Common myeloid progenitor, CD34-positive (primary cell): ENCODE measurements at regions of chr11 and their contacts with region 1.

Region 1: DNA sequence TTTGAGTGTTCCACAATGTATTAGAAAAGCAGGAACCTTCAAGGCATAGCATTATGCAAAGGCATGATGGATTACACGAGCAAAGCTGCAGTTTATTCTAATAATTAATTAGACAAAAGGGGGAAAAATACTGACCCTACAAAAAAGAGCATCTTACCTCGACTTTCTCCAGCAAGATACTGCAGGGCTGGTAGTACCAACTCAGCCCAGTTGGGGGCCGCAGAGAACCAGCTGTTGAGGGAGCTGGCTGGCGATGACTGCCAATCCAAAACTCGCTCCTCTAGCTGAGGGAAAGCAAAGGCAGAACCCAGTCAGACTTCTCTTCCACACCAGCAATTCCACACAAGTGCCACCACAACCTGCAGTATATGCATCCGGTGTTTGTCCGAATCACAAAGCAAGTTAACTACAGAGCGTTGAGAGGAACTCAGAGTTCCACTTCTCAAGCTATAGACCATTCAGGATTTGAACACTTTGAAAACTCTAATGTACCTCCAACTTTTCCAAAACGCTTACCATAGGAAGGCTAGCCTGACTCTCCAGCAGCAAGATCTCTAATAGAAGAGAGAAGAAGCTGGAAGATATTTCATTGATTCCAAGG is 13.7 kb downstream of the NFRKB start:
- DNase-seq: peak; percentile 40 to 63 (median 55)
- H3K4me3 ChIP-seq: no peak overlapping the region
- H3K27ac ChIP-seq: no peak overlapping the region
- H3K4me1 ChIP-seq: no peaks in the 10 kb centered on the region
- H3K27me3 ChIP-seq: no peaks in the 10 kb centered on the region

Region 2: DNA sequence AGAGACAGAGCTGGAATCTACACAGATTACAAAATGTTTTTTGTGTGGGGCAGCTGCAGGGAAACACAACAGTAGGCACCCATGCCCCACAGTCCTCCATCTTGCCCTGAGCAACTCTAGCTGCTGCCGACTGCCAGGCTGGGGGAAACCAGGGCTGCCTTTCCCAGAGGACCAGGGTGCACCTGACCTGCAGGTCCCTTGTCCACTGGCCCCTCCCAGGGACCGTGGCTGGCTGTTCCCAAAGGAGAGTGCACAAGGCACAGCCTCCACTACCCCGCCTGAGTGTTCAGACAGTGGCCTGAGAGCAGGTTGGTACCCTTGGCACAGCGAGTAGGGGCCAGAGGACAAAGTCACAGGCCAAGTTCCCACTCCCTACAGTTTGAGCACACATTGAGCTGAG is 324.2 kb before region 1 on chr11:
- CTCF ChIA-PET with region 1: no interaction called
- POLR2A ChIA-PET with region 1: no interaction called
- DNase-seq: no peak
- H3K4me3 ChIP-seq: no peak overlapping the region
- H3K27ac ChIP-seq: no peak overlapping the region
- H3K4me1 ChIP-seq: no peaks in the 10 kb centered on the region
- H3K27me3 ChIP-seq: peaks cover 0 to 3% (median 0%) of the 10 kb centered on the region in 5 experiments

Region 3: DNA sequence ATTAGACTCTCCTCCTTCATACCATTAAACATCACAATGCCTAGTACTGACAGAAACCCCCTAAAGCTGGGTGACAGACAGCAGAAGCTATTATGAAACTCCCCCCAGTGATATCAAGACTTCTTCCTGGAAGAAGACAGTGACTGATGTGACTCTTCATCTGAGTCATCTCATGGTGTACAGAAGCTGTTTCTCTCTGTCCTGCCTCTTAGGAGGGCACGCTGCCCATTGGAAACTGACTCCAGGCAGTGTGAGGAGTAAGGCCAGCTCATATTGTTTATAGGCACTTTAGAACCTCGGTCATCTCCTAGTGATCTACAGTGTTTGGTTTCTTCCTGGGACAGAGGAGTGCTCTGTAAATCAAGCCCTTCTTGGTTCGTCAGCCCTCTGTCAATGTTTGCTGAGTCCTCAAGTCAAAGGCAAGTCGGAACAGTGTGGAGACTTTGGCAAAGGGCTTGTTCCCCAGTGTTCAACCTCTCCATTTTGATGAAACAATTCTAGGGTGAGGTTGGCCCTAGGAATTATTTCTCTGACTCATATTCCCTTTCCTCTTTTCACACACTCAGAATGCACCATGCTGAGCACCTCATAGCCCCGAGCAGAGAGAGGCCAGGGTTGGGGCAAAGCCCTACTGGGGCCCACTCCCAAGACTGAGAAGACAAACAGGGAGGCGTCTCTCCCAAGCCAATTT is 238.5 kb before region 1 on chr11:
- CTCF ChIA-PET with region 1: no interaction called
- POLR2A ChIA-PET with region 1: no interaction called
- DNase-seq: no peak
- H3K4me3 ChIP-seq: no peak overlapping the region
- H3K27ac ChIP-seq: no peak overlapping the region
- H3K4me1 ChIP-seq: no peaks in the 10 kb centered on the region
- H3K27me3 ChIP-seq: peaks cover 0 to 3% (median 0%) of the 10 kb centered on the region in 5 experiments

Region 4: GRCh38 chr11:129865701-129866100 is 16.0 kb before region 1 on chr11:
- CTCF ChIA-PET with region 1: interaction called, 10 read pairs
- POLR2A ChIA-PET with region 1: no interaction called
- DNase-seq: no peak
- H3K4me3 ChIP-seq: no peak overlapping the region
- H3K27ac ChIP-seq: no peak overlapping the region
- H3K4me1 ChIP-seq: no peaks in the 10 kb centered on the region
- H3K27me3 ChIP-seq: no peaks in the 10 kb centered on the region

Region 5: GRCh38 chr11:130069684-130070108 is 188.0 kb after region 1 on chr11 and contains the start of gene APLP2:
- CTCF ChIA-PET with region 1: no interaction called
- POLR2A ChIA-PET with region 1: no interaction called
- DNase-seq: peak; percentile 98 to 99 (median 99)
- H3K4me3 ChIP-seq: peak within 1 kb of the TSS; percentile 75 to 99 (median 89)
- H3K27ac ChIP-seq: peak within 1 kb of the TSS; percentile 74 to 82
- H3K4me1 ChIP-seq: peaks cover under 1 to 35% (median 28%) of the 10 kb centered on the region in 4 experiments
- H3K27me3 ChIP-seq: no peaks in the 10 kb centered on the region

Region 6: DNA sequence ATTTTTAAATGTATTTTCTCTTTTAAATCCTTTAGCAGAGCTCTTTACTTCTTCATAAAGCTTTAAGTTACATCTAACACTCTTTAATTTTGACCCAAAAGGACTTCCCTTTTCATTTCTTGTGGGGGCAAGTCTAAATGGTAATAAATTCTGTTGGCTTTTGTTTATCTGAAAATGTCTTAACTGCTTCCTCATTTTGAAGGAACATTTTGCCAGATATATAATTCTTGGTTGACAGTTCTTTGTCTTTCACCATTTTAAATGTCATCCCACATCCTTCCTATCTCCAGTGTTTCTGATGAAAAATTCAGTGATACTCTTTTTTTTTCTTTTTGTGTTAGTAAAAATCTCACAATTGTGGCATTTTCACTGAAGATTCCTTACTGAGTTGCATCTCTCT is 477.7 kb after region 1 on chr11:
- CTCF ChIA-PET with region 1: no interaction called
- POLR2A ChIA-PET with region 1: no interaction called
- DNase-seq: peak; percentile 4 to 58 (median 21)
- H3K4me3 ChIP-seq: no peak overlapping the region
- H3K27ac ChIP-seq: no peak overlapping the region
- H3K4me1 ChIP-seq: no peaks in the 10 kb centered on the region
- H3K27me3 ChIP-seq: no peaks in the 10 kb centered on the region